HEK293T (cell line): ENCODE measurements at regions of chr11 and their contacts with region 1.

Region 1: GRCh38 chr11:67468835-67469811 is at the start of gene TMEM134:
- DNase-seq: peak; percentile 97

Region 2: DNA sequence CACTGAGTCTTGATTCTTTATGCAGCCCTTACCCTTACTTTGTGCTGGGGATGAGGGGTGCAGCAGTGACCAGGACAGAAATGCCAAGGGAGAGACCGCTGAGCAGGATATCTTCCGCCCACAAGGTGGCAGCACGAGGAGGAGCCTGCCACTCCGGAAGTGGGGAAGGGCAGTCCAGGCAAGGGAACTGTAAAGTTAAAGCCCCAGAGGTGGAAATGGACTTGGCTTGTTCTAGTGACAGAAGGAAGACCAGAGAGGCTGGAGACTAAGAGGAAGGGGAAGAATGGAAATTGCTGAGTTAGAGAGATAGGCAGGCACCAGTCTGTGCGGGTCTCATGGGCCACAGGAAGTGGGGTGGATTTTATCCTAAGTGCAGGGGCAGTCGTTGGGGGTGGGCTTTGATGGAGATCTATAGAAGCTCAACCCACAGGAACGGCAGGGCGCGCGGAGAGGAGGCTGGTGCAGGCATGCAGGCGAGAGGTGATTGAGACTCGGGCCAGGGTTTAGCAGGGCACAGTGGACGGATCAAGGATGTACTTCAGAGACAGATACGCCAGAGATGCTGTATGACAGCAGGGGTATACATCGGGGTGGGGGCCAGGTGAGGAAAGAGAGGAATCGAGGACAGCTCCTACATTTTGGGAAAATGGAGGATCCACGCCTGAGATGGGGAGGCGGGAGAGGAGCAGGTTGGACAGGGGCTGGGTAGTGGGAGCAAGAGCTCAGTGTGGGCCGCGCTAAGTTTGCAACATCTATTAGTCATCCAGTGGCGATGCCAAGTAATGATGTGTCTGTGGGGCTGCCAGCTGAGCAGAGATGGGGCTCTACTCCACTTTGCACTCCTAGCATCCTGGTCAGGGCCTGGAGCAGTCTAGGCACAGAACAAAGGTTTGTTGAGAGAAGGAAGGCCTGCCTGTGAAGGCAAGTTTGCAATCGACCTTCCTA is 206.1 kb before region 1 on chr11:
- CTCF ChIA-PET with region 1: no interaction called
- POLR2A ChIA-PET with region 1: no interaction called
- DNase-seq: peak; percentile 85

Region 3: DNA sequence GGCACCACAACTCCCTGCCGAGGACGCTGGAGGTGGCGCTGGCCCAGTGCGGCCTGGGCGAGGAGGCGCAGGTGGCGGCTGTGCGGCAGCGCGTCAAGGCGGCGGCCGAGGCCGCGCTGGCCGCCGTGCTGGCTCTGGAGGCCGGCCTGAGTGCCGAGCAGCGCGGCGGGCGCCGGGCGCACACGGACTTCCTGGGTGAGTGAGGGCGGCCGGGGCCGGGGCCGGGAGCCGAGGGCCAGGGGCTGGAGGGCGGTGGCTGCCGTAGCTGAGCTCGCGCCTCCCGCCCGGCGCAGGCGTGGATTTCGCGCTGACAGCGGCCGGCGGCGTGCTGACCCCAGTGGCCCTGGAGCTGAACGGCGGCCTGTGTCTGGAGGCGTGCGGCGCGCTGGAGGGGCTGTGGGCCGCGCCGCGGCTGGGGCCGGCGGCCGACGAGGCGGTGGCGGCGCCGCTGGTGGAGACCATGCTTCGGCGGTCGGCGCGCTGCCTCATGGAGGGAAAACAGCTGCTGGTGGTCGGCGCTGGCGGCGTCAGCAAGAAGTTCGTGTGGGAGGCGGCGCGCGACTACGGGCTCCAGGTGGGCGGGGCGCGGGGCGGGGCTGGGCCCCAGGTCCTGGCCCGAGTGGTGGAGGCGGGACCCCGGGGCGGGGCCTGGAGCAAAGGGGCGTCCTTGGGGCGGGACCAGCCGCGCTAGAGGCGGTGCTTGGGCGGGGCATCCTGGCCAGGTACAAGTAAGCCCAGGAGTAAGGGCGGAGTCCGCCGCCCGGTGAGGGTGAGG is 48.3 kb before region 1 on chr11:
- CTCF ChIA-PET with region 1: no interaction called
- POLR2A ChIA-PET with region 1: interaction called, 14 read pairs
- DNase-seq: peak; percentile 99

Region 4: DNA sequence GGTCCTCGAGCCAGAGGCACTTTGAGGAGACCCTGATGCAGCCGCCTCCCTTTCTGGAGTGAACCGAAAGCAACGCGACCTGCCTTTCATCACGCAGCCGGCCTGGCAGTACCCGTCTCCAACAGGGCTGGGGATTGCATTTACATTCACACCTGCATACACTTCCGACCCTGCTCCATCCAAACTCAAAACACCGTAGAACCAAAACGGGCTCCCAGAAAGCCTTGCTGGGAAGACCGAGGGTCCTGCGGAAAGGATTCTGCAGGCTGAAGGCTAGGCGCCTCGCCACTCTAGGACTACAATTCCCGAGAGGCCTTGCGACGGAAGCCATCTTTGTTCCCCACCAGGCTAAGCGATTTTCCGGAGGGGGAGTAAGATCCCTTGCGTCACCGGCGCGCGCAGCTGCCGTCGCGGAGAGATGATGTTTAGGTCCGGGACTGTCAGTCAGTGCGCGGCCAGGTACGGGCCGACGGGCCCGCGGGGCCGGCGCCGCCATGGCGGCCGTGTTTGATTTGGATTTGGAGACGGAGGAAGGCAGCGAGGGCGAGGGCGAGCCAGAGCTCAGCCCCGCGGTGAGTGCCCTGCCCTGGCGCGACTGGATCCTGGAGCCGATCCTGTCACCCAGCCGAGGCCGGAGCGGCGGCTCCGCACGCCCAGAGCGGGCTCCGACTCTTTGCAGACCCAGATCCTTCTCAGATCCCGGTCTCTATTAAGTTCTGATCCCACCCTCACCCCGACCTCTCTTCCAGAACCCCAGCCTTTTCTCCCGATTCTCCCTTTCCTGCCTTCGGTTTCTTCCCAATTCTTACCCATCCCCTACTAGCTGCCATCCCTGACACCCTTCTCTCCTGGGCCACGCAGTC is 40.8 kb before region 1 on chr11 and contains the start of gene RPS6KB2:
- CTCF ChIA-PET with region 1: no interaction called
- POLR2A ChIA-PET with region 1: interaction called, 12 read pairs
- DNase-seq: peak; percentile 98

Region 5: GRCh38 chr11:67439321-67439883 is 29.7 kb before region 1 on chr11:
- CTCF ChIA-PET with region 1: no interaction called
- POLR2A ChIA-PET with region 1: interaction called, 14 read pairs
- DNase-seq: no peak